ENCODE measurements at regions of chr6 and their contacts with region 1.

Region 1: GRCh38 chr6:158660333-158660754 is 10.5 kb downstream of the SYTL3 start:
- DNase-seq: no peak
- H3K4me3 ChIP-seq: no peak overlapping the region
- H3K27me3 ChIP-seq: no peaks in the 10 kb centered on the region
- CTCF ChIP-seq: peak; percentile 53

Region 2: DNA sequence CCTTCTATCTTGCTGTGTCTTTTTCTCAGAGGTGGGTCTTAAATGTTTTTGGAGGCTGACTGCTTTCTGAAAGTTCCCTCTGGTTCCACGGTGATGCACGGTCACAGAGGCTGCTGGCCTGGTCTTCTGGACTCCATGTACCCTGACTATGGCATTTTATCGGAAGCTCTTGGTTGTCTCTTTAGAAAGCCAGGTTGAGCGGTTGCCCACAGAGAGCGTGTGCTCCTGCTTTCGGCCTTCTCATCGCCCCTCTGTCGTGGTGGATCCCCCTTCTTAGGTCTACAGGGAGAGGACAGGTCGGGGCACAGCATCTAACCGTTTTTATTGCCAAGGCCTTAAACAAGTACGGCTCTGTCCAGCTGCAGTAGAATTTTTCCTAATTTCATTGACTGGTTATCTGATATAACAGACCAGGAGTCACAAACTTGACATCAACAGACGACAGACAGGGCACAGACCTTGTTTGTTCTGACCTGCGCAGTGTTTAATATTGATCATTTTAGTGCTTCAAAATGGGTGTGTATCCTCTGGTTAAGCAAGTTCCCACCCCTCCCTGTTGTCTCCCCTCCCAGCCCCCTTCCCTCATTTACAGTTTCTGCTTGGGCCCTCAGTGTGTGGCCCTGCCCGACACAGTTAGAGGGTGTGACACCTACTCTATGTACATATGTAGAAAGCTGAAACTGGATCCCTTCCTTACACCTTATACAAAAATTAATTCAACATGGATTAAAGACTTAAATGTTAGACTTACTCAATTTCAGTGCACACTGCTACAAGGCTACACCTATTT is 14.2 kb after region 1 on chr6:
- CTCF ChIA-PET with region 1: interaction called, 12 read pairs
- POLR2A ChIA-PET with region 1: no interaction called
- DNase-seq: no peak
- H3K4me3 ChIP-seq: no peak overlapping the region
- H3K27me3 ChIP-seq: no peaks in the 10 kb centered on the region
- CTCF ChIP-seq: no peak

Measured in BJ (cell line).